ENCODE measurements at regions of chr12 and their contacts with region 1.

Region 1: GRCh38 chr12:46933947-46934346 is 108.2 kb upstream of the SLC38A4 start:
- DNase-seq: no peak
- ATAC-seq: peak in 3 of 4 donors; percentile 84 to 90 (median 88)
- H3K4me3 ChIP-seq: no peak overlapping the region
- H3K27ac ChIP-seq: no peak overlapping the region
- H3K4me1 ChIP-seq: no peaks in the 10 kb centered on the region
- H3K27me3 ChIP-seq: no peaks in the 10 kb centered on the region
- CTCF ChIP-seq: peak in 3 of 4 donors; percentile 35 to 36 (median 35)

Region 2: DNA sequence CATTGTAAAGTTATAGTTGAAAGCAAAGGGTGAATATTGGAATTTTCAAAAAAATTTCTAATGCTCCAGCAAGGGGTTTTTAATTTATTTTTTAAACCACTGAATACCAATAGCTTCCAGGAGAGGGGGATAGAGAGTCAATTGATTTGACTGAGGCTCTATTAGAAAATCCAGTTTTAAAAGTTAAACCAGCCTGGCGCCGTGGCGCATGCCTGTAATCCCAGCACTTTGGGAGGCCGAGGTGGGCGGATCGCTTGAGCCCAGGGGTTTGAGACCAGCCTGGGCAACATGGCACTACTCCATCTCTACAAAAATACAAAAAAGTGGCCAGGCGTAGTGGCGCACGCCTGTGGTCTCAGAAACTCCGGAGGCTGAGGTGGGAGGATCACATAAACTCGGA is 258.2 kb before region 1 on chr12:
- intact Hi-C with region 1: loop called in 2 of 3 experiments (anchors 5 to 10 kb)
- DNase-seq: peak in 4 of 6 donors; percentile 28 to 56 (median 42)
- ATAC-seq: peak; percentile 60 to 83 (median 81)
- H3K4me3 ChIP-seq: no peak overlapping the region
- H3K27ac ChIP-seq: no peak overlapping the region
- H3K4me1 ChIP-seq: no peaks in the 10 kb centered on the region
- H3K27me3 ChIP-seq: no peaks in the 10 kb centered on the region
- CTCF ChIP-seq: peak; percentile 15 to 62 (median 57)

Region 3: GRCh38 chr12:46682148-46682547 is 251.8 kb before region 1 on chr12:
- intact Hi-C with region 1: loop called in 2 of 3 experiments (anchors 5 to 10 kb)
- DNase-seq: no peak
- ATAC-seq: no peak
- H3K4me3 ChIP-seq: no peak overlapping the region
- H3K27ac ChIP-seq: no peak overlapping the region
- H3K4me1 ChIP-seq: no peaks in the 10 kb centered on the region
- H3K27me3 ChIP-seq: no peaks in the 10 kb centered on the region
- CTCF ChIP-seq: no peak

Region 4: GRCh38 chr12:46900734-46901463 is 33.0 kb before region 1 on chr12:
- intact Hi-C with region 1: no loop called
- DNase-seq: no peak
- ATAC-seq: no peak
- H3K4me3 ChIP-seq: no peak overlapping the region
- H3K27ac ChIP-seq: no peak overlapping the region
- H3K4me1 ChIP-seq: no peaks in the 10 kb centered on the region
- H3K27me3 ChIP-seq: no peaks in the 10 kb centered on the region
- CTCF ChIP-seq: no peak

Region 5: DNA sequence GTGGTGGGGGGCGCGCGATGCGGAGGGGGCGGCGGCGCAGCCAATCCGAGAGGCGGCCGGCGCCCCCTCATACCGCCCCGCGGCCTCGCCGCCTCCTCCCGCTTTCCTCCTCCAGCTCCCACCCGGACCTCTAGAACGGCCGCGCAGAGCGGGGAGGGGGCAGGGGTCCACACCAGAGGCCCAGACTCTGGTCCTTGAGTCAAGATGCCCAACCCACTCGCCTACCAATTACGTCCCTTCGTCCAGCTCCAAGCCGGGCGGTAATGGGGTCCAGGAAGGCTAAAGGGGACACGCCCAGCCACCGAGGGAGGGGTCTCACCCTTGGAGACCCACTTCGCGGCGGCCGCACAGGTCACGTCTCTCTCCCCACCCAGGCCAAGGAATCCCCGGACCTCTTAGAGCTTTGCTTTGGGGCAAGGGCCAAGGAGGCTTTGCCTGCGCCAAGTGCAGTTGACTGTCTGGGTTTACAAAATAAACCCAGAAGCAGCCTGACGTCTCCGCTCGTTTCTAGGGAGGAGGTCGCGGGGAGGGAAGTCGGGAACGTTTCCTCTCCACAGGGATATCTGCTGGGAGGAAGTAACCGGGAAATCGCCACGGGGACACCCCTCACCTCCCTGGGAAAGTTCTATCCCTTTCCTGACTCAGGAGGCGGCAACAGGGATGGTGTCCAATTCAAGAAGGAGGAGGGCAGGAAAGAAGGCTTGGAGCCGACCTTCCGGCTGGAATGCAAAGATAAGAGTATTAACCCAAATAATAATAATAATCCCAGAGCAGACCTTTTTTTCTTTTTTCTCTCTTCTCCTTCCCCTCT is 146.2 kb after region 1 on chr12:
- intact Hi-C with region 1: no loop called
- DNase-seq: peak; percentile 34 to 81 (median 56)
- ATAC-seq: peak; percentile 52 to 62 (median 59)
- H3K4me3 ChIP-seq: peak overlapping the region; percentile 55 to 77 (median 70)
- H3K27ac ChIP-seq: peak overlapping the region; percentile 49 to 88 (median 66)
- H3K4me1 ChIP-seq: peaks cover 0 to 14% (median 0%) of the 10 kb centered on the region in 3 donors
- H3K27me3 ChIP-seq: no peaks in the 10 kb centered on the region
- CTCF ChIP-seq: no peak

Measured in pancreas (tissue), 10 donors.